Sigmoid colon (tissue), 7 donors: ENCODE measurements at regions of chr9 and their contacts with region 1.

Region 1: GRCh38 chr9:98796364-98797101 is at the start of gene ANKS6:
- DNase-seq: peak; percentile 88
- H3K4me3 ChIP-seq: peak within 1 kb of the TSS; percentile 48 to 78 (median 68)
- H3K27ac ChIP-seq: peak within 1 kb of the TSS; percentile 85 to 90 (median 88)
- H3K4me1 ChIP-seq: peaks cover 0 to 26% (median 20%) of the 10 kb centered on the region in 4 donors
- H3K27me3 ChIP-seq: no peaks in the 10 kb centered on the region
- CTCF ChIP-seq: peak in 2 of 4 experiments; percentile 14 to 35
- EP300 ChIP-seq: no peak
- POLR2A ChIP-seq: peak; percentile 22 to 36
- total RNA-seq, gene ANKS6: 10.2 to 22.8 (median 16.4) TPM

Region 2: DNA sequence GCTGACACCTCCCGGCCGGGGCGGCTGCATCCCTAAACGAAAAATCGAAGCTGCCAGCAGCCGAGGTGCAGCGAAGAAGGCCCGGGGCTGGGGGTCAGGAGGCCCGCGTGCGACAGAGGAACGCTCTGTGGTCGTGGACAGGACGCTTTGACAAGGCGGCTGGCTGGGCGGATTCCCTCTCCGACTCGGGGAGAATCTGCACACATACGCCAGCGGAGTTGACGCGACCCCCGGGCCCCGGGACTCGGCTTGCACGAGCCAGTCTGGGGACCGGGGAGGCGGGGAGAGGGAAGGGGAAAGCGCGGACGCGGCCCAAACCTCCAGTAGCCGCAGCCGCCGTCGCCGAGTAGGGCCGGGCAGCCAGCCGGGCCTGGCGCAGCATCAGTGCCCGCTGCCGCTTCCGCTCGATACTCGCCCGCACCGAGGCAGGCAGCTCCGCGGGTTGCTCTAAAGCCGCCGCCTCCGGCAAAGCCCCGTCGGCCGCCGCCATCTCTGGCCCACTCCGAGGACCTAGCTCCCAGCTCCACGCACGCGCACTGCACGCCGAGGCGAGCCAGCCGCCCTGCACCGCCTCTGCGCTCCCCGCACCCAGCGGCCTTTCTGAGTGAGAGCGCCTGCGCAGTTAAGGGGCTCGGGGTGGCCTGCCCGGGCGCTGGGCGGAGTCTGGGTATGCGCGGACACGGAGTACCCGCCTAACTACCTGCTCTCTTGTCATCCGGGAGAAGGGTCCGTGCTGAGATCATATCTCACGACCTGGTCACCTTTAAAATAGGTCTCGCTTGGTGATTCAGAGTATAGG is 1099.5 kb before region 1 on chr9 and contains the start of gene XPA:
- intact Hi-C with region 1: loop called (anchors 5 kb)
- DNase-seq: peak; percentile 98
- H3K4me3 ChIP-seq: peak within 1 kb of the TSS; percentile 65 to 99 (median 68)
- H3K27ac ChIP-seq: peak within 1 kb of the TSS; percentile 87 to 97 (median 92)
- H3K4me1 ChIP-seq: peaks cover 0 to 36% (median 31%) of the 10 kb centered on the region in 4 donors
- H3K27me3 ChIP-seq: no peaks in the 10 kb centered on the region
- CTCF ChIP-seq: no peak
- EP300 ChIP-seq: no peak
- POLR2A ChIP-seq: peak; percentile 80 to 85
- total RNA-seq, gene XPA: 21.7 to 33.2 (median 31.2) TPM

Region 3: DNA sequence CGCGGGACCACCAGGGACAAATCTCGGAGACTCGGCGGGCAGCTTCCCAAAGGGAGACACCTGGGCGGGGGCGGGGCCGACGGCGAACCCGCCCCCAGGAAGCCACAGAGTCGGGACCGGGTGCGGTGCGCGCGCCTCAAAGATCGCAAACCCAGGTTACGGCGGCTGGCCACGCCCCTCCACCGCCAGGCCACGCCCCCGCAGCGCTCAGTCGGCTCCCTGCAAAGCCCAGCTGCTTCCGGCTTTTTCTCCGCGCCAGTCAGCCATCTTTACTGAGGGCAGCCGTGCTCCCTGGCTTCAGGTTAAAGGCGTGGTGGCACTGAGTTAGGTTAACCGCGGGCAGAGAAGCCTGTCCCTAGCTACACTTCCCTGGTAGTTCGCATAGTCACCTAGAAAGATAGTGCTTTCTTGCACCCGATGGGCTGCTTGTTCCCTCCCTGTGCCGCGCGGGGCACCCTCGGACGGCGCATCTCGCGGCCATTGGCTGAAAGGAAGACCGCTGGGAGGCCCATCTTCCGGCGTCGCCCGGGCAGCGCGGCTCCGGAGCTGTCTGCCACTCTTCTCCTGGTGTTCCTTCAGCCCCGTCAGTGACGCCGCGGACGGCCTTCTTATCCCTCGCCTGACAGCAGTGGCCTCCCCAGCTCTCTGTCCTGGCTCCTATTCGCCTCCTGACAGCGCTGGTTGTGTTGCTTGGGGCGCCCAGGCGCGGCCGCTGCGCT is 540.8 kb before region 1 on chr9 and contains the start of gene TBC1D2:
- intact Hi-C with region 1: loop called (anchors 2 kb)
- DNase-seq: peak; percentile 97
- H3K4me3 ChIP-seq: peak within 1 kb of the TSS; percentile 52 to 95 (median 89)
- H3K27ac ChIP-seq: peak within 1 kb of the TSS; percentile 91 to 98 (median 95)
- H3K4me1 ChIP-seq: peaks cover 0 to 23% (median 18%) of the 10 kb centered on the region in 4 donors
- H3K27me3 ChIP-seq: no peaks in the 10 kb centered on the region
- CTCF ChIP-seq: no peak
- EP300 ChIP-seq: no peak
- POLR2A ChIP-seq: peak; percentile 40 to 51
- total RNA-seq, gene TBC1D2: 4.8 to 13.8 (median 5.3) TPM